ENCODE measurements at regions of chr1 and their contacts with region 1.

Region 1: GRCh38 chr1:160376525-160377131 is 9.8 kb downstream of the NHLH1 start:
- DNase-seq: peak; percentile 84
- H3K4me3 ChIP-seq: no peak overlapping the region
- H3K27ac ChIP-seq: no peak overlapping the region
- H3K4me1 ChIP-seq: peaks cover 20% of the 10 kb centered on the region
- H3K27me3 ChIP-seq: no peaks in the 10 kb centered on the region
- CTCF ChIP-seq: peak; percentile 92

Region 2: DNA sequence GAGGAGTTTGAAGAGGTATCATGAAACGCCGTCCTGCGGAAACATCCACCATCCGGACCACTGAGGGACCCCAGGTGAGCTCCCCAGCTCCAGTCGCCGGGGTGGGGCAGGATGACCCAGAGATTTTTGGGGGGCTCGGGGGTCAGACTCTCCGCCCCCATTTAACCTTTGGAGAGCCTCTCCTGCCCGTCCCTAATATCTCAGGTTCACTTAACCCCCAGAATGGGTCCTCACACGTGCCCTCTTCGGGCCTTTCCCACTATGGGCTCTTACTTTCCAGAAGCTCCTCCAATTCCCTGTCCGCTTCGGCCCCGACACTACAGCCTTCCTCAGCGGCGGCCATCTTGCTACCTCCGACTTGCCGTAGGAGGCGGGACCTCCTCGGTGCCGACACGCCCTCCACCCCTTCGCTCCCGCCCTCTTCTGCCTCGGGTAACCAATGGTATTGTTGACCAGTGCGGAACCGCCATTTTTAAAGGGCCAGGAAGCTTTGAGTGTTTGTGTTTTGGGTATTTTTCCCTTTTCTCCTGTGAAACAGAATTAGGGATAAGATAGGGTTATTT is 91.8 kb before region 1 on chr1 and contains the start of gene PEX19:
- CTCF ChIA-PET with region 1: no interaction called
- POLR2A ChIA-PET with region 1: no interaction called
- intact Hi-C with region 1: loop called (anchors 5 kb)
- DNase-seq: peak; percentile 96
- H3K4me3 ChIP-seq: peak within 1 kb of the TSS; percentile 81
- H3K27ac ChIP-seq: peak within 1 kb of the TSS; percentile 82
- H3K4me1 ChIP-seq: peaks cover 7% of the 10 kb centered on the region
- H3K27me3 ChIP-seq: no peaks in the 10 kb centered on the region
- CTCF ChIP-seq: no peak
- total RNA-seq, gene PEX19: 67.0 and 69.1 TPM in 2 replicates

Region 3: GRCh38 chr1:160354388-160354985 is 22.1 kb before region 1 on chr1:
- CTCF ChIA-PET with region 1: interaction called, 19 read pairs
- POLR2A ChIA-PET with region 1: no interaction called
- intact Hi-C with region 1: no loop called
- DNase-seq: peak; percentile 60
- H3K4me3 ChIP-seq: no peak overlapping the region
- H3K27ac ChIP-seq: no peak overlapping the region
- H3K4me1 ChIP-seq: no peaks in the 10 kb centered on the region
- H3K27me3 ChIP-seq: no peaks in the 10 kb centered on the region
- CTCF ChIP-seq: peak; percentile 70

Region 4: DNA sequence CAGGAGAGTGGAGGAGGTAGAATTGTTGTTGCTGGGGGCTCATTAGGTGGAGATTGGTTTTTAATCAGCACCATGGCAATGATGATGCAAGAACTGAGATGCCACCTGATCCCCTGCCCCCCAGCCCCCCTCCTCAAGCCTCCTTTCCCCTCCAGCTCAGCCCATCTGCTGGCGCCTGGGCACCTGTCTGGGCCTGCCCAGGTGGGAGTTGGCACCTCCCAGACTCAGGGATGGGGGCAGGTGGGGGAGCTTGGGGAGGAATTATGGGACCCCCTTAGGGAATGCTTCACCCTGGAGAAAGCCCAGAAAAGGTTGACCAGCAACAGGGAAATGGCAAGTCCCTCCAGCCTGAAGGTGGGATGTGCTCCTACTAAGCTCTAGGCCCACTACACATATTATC is 11.3 kb before region 1 on chr1:
- CTCF ChIA-PET with region 1: no interaction called
- POLR2A ChIA-PET with region 1: no interaction called
- intact Hi-C with region 1: no loop called
- DNase-seq: no peak
- H3K4me3 ChIP-seq: no peak overlapping the region
- H3K27ac ChIP-seq: no peak overlapping the region
- H3K4me1 ChIP-seq: peaks cover 16% of the 10 kb centered on the region
- H3K27me3 ChIP-seq: no peaks in the 10 kb centered on the region
- CTCF ChIP-seq: no peak

Region 5: GRCh38 chr1:160675641-160676410 is 299.2 kb after region 1 on chr1:
- CTCF ChIA-PET with region 1: no interaction called
- POLR2A ChIA-PET with region 1: no interaction called
- intact Hi-C with region 1: no loop called
- DNase-seq: peak; percentile 70
- H3K4me3 ChIP-seq: no peak overlapping the region
- H3K27ac ChIP-seq: no peak overlapping the region
- H3K4me1 ChIP-seq: no peaks in the 10 kb centered on the region
- H3K27me3 ChIP-seq: peaks cover 12% of the 10 kb centered on the region
- CTCF ChIP-seq: peak; percentile 93